ENCODE measurements at regions of chr13 and their contacts with region 1.

Region 1: GRCh38 chr13:75691183-75691582 is 55.1 kb downstream of the LMO7 start:
- DNase-seq: no peak
- ATAC-seq: peak in 3 of 4 donors; percentile 23 to 60 (median 39)
- H3K4me3 ChIP-seq: no peak overlapping the region
- H3K27ac ChIP-seq: no peak overlapping the region
- H3K4me1 ChIP-seq: peaks cover 0 to 3% (median 0%) of the 10 kb centered on the region in 3 donors
- H3K27me3 ChIP-seq: no peaks in the 10 kb centered on the region
- CTCF ChIP-seq: no peak

Region 2: GRCh38 chr13:75219479-75220237 is 471.5 kb before region 1 on chr13:
- intact Hi-C with region 1: no loop called
- DNase-seq: peak; percentile 37 to 97 (median 80)
- ATAC-seq: peak; percentile 90 to 100 (median 99)
- H3K4me3 ChIP-seq: peak overlapping the region in 1 of 4 donors; percentile 16
- H3K27ac ChIP-seq: no peak overlapping the region
- H3K4me1 ChIP-seq: no peaks in the 10 kb centered on the region
- H3K27me3 ChIP-seq: no peaks in the 10 kb centered on the region
- CTCF ChIP-seq: peak; percentile 77 to 96 (median 94)

Region 3: DNA sequence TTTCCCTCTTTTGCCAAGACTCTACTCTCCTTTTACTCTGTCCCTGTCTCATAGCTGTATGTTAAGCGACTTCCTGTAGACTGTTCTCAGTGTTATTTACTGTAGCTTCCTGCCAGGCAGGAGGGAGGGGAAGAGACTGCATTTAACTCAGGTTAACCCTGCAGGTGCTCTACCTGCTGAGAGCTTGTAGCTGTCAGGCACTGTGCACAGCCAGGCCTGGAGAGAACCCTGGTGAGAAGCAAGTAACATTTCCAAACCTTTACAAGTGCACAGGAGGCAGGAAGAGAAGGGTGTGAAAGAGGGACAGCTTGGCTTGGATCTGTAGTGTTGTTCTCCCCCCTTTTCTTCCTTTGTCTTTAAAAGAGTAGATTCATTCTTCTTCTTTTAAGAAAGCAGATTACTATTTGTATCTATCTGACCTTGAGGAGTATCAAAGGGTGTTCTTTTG is 112.0 kb after region 1 on chr13:
- intact Hi-C with region 1: loop called in 1 of 3 experiments (anchors 10 kb)
- DNase-seq: peak in 1 of 6 donors; percentile 37
- ATAC-seq: peak; percentile 74 to 93 (median 91)
- H3K4me3 ChIP-seq: no peak overlapping the region
- H3K27ac ChIP-seq: peak overlapping the region in 2 of 4 donors; percentile 27 to 44
- H3K4me1 ChIP-seq: peaks cover 0 to 12% (median 11%) of the 10 kb centered on the region in 3 donors
- H3K27me3 ChIP-seq: no peaks in the 10 kb centered on the region
- CTCF ChIP-seq: no peak

Region 4: GRCh38 chr13:75864718-75865117 is 173.5 kb after region 1 on chr13:
- intact Hi-C with region 1: loop called in 1 of 3 experiments (anchors 10 kb)
- DNase-seq: no peak
- ATAC-seq: no peak
- H3K4me3 ChIP-seq: no peak overlapping the region
- H3K27ac ChIP-seq: no peak overlapping the region
- H3K4me1 ChIP-seq: no peaks in the 10 kb centered on the region
- H3K27me3 ChIP-seq: peaks cover 0 to 4% (median 1%) of the 10 kb centered on the region in 4 donors
- CTCF ChIP-seq: no peak

Region 5: GRCh38 chr13:75870397-75870903 is 179.3 kb after region 1 on chr13:
- intact Hi-C with region 1: loop called in 2 of 3 experiments (anchors 5 to 10 kb)
- DNase-seq: peak in 1 of 6 donors; percentile 8
- ATAC-seq: peak in 3 of 4 donors; percentile 64 to 78 (median 73)
- H3K4me3 ChIP-seq: peak overlapping the region in 2 of 4 donors; percentile 22 to 24
- H3K27ac ChIP-seq: no peak overlapping the region
- H3K4me1 ChIP-seq: no peaks in the 10 kb centered on the region
- H3K27me3 ChIP-seq: peaks cover 0 to 4% (median 1%) of the 10 kb centered on the region in 4 donors
- CTCF ChIP-seq: peak in 3 of 4 donors; percentile 55 to 66 (median 64)

Region 6: DNA sequence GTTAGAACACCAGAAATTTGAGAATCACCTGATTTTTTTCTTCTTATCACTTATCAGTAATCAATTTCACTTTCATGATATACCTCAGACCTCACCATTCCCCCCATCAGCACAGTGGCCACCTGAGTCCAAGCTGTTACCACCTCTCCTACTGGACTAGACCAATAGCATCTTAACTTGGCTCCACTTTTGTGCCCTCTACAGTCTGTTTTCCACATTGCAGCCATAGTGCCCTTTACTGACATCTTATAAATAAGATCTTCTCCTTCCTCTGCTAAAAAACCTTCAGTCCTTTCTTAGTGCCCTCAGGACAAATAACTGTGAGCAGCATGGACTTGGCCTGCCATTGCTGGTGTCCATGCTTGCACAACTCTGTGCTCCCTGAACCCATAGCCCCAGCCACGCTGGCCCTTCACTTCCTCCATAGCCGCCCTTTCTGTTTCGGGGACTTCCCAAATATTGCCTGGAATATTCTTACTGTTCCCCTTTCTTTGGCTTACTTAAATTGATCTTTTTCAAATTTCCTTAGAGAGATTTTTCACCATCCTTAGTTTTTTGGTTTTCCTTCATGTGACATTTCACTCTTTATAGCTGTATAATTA is 325.7 kb after region 1 on chr13:
- intact Hi-C with region 1: loop called in 1 of 3 experiments (anchors 10 kb)
- DNase-seq: peak in 1 of 6 donors; percentile 15
- ATAC-seq: peak in 3 of 4 donors; percentile 62 to 72 (median 68)
- H3K4me3 ChIP-seq: no peak overlapping the region
- H3K27ac ChIP-seq: no peak overlapping the region
- H3K4me1 ChIP-seq: no peaks in the 10 kb centered on the region
- H3K27me3 ChIP-seq: no peaks in the 10 kb centered on the region
- CTCF ChIP-seq: peak in 1 of 4 donors; percentile 11

Region 7: DNA sequence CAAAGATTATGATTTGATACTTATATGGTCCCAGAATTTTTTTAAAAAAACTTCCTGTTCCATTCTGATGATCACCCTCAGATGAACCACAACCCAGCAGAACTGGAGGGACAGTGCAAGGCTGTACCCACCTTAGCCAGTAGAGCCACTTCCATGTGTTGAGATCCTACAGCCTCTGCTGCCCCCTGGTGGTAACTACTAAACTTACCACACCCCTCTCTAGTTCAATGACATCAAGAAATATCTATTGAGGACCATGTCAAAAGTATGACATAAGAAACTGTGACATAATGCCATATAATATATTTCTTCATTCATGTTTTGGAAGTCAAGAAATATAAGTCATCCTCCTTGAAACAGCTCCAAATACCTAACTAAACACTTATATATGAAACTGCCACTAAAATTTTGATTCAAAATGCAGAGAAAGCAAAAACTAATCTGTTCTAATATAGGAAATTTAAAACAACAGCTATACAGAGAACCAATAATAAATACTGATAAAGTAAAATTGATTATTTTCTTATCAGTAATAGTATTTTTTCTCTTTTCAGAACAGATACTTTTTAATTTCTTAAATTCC is 782.5 kb after region 1 on chr13:
- intact Hi-C with region 1: loop called in 1 of 3 experiments (anchors 5 kb)
- DNase-seq: peak in 5 of 6 donors; percentile 54 to 81 (median 57)
- ATAC-seq: peak; percentile 88 to 99 (median 98)
- H3K4me3 ChIP-seq: no peak overlapping the region
- H3K27ac ChIP-seq: no peak overlapping the region
- H3K4me1 ChIP-seq: no peaks in the 10 kb centered on the region
- H3K27me3 ChIP-seq: no peaks in the 10 kb centered on the region
- CTCF ChIP-seq: peak; percentile 74 to 89 (median 82)